ENCODE measurements at regions of chr6 and their contacts with region 1.

Region 1: DNA sequence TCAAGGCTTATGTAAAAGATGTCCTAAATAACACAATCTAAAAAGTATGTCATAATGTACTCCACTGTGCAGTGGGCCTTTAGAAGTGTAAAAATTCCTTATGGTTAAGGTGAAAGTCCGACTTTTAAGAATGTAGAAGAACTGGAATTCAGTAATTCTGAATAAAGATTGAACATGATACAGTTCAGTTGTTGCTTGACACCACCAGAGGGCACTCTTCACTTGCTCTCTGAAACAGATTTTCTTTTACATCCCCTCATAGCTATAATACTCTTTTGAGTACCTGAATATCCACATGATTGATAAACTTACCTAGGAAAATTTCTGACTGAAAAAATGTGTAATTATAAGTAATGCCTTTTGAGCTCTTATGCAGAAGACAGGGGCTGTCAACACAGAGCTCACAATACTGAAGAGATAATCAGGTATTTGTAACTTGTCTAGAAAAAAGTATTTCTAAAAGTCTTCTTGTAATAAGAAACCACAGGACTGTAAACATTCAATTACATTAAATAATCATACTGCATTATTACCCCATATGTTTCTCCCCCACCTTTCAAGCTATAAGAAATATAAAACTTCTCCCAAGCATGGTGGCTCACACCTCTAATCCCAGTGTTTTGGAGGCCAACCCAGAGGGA is 92.1 kb downstream of the POPDC3 start:
- DNase-seq: no peak
- H3K4me3 ChIP-seq: no peak overlapping the region
- H3K27me3 ChIP-seq: no peaks in the 10 kb centered on the region
- CTCF ChIP-seq: peak; percentile 73

Region 2: DNA sequence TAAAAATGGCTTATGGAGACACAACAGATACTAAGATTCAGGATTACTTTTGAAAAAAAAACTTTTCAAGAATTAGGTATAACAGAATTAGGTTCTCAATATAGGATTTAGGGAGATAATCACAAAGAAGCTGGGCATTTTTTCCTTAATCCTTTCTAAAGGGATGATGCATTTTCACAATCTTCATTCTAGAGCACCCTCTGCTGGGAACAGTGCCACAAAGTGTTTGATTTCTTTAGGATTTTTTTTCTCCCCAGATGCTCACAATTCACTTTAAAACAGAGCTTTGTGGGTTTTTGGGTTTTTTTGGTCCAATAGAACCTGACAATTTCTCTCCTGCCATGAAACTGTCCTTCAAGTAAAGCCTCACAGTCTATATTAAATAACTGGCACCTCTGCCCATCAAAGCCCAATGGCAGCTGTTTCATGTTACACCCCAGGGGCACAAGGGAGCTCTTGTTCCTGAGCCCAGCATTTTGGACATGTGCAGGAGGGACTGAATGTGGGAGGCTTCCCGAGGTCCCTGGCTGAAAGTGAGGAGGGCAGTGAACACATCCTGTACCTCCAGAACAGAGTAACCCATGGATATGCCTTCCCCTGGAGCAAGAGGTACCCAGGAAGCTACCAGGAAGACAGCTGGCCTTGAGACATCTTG is 275.5 kb after region 1 on chr6:
- CTCF ChIA-PET with region 1: interaction called, 72 read pairs
- POLR2A ChIA-PET with region 1: no interaction called
- DNase-seq: no peak
- H3K4me3 ChIP-seq: no peak overlapping the region
- H3K27me3 ChIP-seq: no peaks in the 10 kb centered on the region
- CTCF ChIP-seq: peak; percentile 42

Region 3: GRCh38 chr6:105402939-105403935 is 315.5 kb after region 1 on chr6 and contains the start of gene PREP:
- CTCF ChIA-PET with region 1: interaction called, 24 read pairs
- POLR2A ChIA-PET with region 1: no interaction called
- DNase-seq: no peak
- H3K4me3 ChIP-seq: peak within 1 kb of the TSS; percentile 85
- H3K27me3 ChIP-seq: no peaks in the 10 kb centered on the region
- CTCF ChIP-seq: peak; percentile 83
- polyA plus RNA-seq, gene PREP: 10.8 and 12.0 TPM in 2 replicates

Region 4: DNA sequence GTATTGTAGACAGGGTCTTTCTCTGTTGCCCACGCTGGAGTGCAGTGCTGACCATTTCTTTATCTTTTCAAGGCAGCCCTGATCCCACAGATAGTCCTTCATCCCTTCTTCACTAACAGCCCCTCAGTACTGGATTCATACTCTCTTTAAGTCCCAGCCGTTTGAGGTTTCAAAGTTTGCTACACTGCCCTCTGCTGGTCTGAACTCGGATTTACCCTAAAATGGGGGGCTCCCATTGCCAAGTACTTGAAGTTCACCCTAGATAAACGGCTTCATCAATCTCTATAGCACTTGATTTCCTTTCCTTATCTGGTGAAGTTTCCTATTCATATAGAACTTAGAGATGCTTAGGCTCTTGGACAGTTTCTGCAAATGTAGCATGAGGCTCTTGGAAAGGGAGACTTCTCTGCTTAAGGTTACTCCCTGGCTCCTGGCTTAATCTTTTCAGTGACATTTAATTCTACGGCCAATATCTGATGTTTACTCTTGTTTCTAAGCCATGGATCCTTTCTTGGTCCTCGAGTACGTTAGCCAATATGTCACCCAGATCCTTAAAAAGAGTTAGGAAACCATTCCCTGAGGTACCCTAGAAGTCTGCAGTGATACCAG is 336.6 kb after region 1 on chr6:
- CTCF ChIA-PET with region 1: interaction called, 22 read pairs
- POLR2A ChIA-PET with region 1: no interaction called
- DNase-seq: no peak
- H3K4me3 ChIP-seq: no peak overlapping the region
- H3K27me3 ChIP-seq: peaks cover 1% of the 10 kb centered on the region
- CTCF ChIP-seq: peak; percentile 71

Measured in BJ (cell line).